ENCODE measurements at regions of chr10 and their contacts with region 1.

Region 1: GRCh38 chr10:43105102-43105785 is 28.4 kb downstream of the RET start:
- DNase-seq: peak; percentile 48 to 91 (median 75)
- ATAC-seq: peak; percentile 95
- H3K4me3 ChIP-seq: peak overlapping the region; percentile 60
- H3K4me3 Mint-ChIP-seq: peak overlapping the region; percentile 61 to 85 (median 76)
- H3K27ac ChIP-seq: no peak overlapping the region
- H3K27ac Mint-ChIP-seq: peak overlapping the region in 1 of 9 donors; percentile 49
- H3K4me1 ChIP-seq: peaks cover 0 to 8% of the 10 kb centered on the region in 2 donors
- H3K4me1 Mint-ChIP-seq: peaks cover 0 to 15% (median 7%) of the 10 kb centered on the region in 7 donors
- H3K27me3 ChIP-seq: no peaks in the 10 kb centered on the region
- H3K27me3 Mint-ChIP-seq: peaks cover 15 to 26% (median 26%) of the 10 kb centered on the region in 5 donors

Region 2: DNA sequence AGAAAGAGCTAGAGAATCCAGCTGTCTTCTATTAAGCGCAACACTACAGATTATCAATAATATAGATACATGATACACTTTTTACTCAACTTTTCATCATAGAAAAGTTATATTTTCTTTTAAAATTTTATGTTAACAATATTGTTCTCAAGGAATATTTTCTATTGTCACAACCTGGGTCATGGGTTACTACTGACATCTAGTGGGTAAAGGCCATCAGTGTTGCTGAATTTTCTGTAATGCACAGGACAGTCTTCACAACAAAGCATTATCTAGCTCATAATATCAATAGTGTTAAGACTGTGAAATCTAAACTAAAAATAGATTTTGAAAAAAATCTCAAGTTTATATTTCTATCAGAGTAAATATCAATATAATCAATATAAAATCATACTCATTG is 676.7 kb before region 1 on chr10:
- CTCF ChIA-PET with region 1: no interaction called
- POLR2A ChIA-PET with region 1: no interaction called
- intact Hi-C with region 1: no loop called
- DNase-seq: no peak
- ATAC-seq: no peak
- H3K4me3 ChIP-seq: no peak overlapping the region
- H3K4me3 Mint-ChIP-seq: no peak overlapping the region
- H3K27ac ChIP-seq: no peak overlapping the region
- H3K27ac Mint-ChIP-seq: no peak overlapping the region
- H3K4me1 ChIP-seq: no peaks in the 10 kb centered on the region
- H3K4me1 Mint-ChIP-seq: no peaks in the 10 kb centered on the region
- H3K27me3 ChIP-seq: no peaks in the 10 kb centered on the region
- H3K27me3 Mint-ChIP-seq: peaks cover 0 to 11% (median 5%) of the 10 kb centered on the region in 5 donors

Region 3: GRCh38 chr10:42753126-42753506 is 352.1 kb before region 1 on chr10:
- CTCF ChIA-PET with region 1: interaction called, 3 read pairs
- POLR2A ChIA-PET with region 1: no interaction called
- intact Hi-C with region 1: loop called in 1 of 2 experiments (anchors 1 kb)
- DNase-seq: peak; percentile 8 to 79 (median 51)
- ATAC-seq: peak; percentile 75
- H3K4me3 ChIP-seq: peak overlapping the region; percentile 59
- H3K4me3 Mint-ChIP-seq: peak overlapping the region; percentile 70 to 89 (median 83)
- H3K27ac ChIP-seq: no peak overlapping the region
- H3K27ac Mint-ChIP-seq: no peak overlapping the region
- H3K4me1 ChIP-seq: peaks cover 0 to 6% of the 10 kb centered on the region in 2 donors
- H3K4me1 Mint-ChIP-seq: peaks cover 0 to 8% (median 4%) of the 10 kb centered on the region in 7 donors
- H3K27me3 ChIP-seq: peaks cover 0 to 10% of the 10 kb centered on the region in 2 donors
- H3K27me3 Mint-ChIP-seq: peaks cover 59 to 71% (median 67%) of the 10 kb centered on the region in 5 donors

Region 4: GRCh38 chr10:42767906-42768305 is 337.3 kb before region 1 on chr10:
- CTCF ChIA-PET with region 1: no interaction called
- POLR2A ChIA-PET with region 1: no interaction called
- intact Hi-C with region 1: no loop called
- DNase-seq: no peak
- ATAC-seq: no peak
- H3K4me3 ChIP-seq: no peak overlapping the region
- H3K4me3 Mint-ChIP-seq: no peak overlapping the region
- H3K27ac ChIP-seq: no peak overlapping the region
- H3K27ac Mint-ChIP-seq: no peak overlapping the region
- H3K4me1 ChIP-seq: no peaks in the 10 kb centered on the region
- H3K4me1 Mint-ChIP-seq: peaks cover 0 to 5% (median 0%) of the 10 kb centered on the region in 7 donors
- H3K27me3 ChIP-seq: no peaks in the 10 kb centered on the region
- H3K27me3 Mint-ChIP-seq: peaks cover 13 to 60% (median 46%) of the 10 kb centered on the region in 5 donors

Region 5: DNA sequence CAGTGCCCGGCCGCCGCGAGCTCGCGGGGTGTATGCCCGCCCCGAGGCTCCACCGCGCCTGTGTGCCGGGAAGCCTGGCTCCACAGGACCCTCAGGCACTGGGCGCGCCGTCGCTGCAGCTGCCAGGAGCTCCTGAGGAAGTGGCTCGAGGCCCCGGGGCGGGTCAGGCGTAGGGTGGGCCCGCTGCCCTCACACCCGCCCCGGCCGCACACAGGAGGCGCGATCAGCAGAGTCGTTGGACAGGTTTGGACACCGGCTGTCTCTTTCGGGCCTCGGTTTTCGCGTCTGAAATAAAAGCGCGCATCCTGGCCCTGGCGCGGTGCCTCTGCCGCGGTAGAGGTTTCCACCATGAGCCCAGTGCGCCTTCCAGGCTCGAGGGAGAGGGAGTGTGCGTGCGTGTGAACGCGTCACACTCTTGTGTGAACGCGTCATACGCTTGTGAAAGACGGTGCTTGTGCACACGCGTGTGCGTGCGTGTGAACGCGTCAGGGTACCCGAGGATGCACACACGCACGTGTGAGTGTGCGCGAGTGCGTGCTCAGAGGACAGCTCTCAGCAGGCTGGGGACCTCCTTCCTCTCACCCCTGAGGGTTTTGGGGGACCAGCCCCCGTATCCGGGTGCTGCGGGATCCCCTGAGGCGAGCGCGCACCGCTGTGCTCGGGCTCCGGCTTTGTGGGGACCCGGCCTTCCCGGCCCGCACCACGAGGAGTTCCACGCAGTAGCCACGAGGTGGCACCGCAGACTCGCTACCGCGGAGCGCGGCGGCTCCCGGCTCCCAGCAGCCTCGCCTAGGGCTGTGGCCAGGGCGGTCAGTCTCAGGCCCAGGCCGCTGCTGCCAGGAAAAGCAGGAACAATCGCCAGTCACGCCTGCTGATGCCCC is 238.9 kb before region 1 on chr10:
- CTCF ChIA-PET with region 1: interaction called, 3 read pairs
- POLR2A ChIA-PET with region 1: no interaction called
- intact Hi-C with region 1: loop called in 1 of 2 experiments (anchors 1 kb)
- DNase-seq: peak; percentile 26 to 56 (median 36)
- ATAC-seq: peak; percentile 82
- H3K4me3 ChIP-seq: no peak overlapping the region
- H3K4me3 Mint-ChIP-seq: peak overlapping the region in 5 of 10 donors; percentile 45 to 64 (median 51)
- H3K27ac ChIP-seq: no peak overlapping the region
- H3K27ac Mint-ChIP-seq: no peak overlapping the region
- H3K4me1 ChIP-seq: no peaks in the 10 kb centered on the region
- H3K4me1 Mint-ChIP-seq: peaks cover 0 to 11% (median 7%) of the 10 kb centered on the region in 7 donors
- H3K27me3 ChIP-seq: no peaks in the 10 kb centered on the region
- H3K27me3 Mint-ChIP-seq: peaks cover 27 to 45% (median 43%) of the 10 kb centered on the region in 5 donors

Region 6: GRCh38 chr10:43078987-43079275 is 26.3 kb before region 1 on chr10:
- CTCF ChIA-PET with region 1: no interaction called
- POLR2A ChIA-PET with region 1: no interaction called
- intact Hi-C with region 1: loop called in 1 of 2 experiments (anchors 1 kb)
- DNase-seq: peak in 1 of 9 donors; percentile 42
- ATAC-seq: no peak
- H3K4me3 ChIP-seq: no peak overlapping the region
- H3K4me3 Mint-ChIP-seq: peak overlapping the region in 5 of 10 donors; percentile 13 to 72 (median 43)
- H3K27ac ChIP-seq: no peak overlapping the region
- H3K27ac Mint-ChIP-seq: no peak overlapping the region
- H3K4me1 ChIP-seq: no peaks in the 10 kb centered on the region
- H3K4me1 Mint-ChIP-seq: peaks cover 0 to 16% (median 8%) of the 10 kb centered on the region in 7 donors
- H3K27me3 ChIP-seq: no peaks in the 10 kb centered on the region
- H3K27me3 Mint-ChIP-seq: peaks cover 15 to 43% (median 33%) of the 10 kb centered on the region in 5 donors

Region 7: DNA sequence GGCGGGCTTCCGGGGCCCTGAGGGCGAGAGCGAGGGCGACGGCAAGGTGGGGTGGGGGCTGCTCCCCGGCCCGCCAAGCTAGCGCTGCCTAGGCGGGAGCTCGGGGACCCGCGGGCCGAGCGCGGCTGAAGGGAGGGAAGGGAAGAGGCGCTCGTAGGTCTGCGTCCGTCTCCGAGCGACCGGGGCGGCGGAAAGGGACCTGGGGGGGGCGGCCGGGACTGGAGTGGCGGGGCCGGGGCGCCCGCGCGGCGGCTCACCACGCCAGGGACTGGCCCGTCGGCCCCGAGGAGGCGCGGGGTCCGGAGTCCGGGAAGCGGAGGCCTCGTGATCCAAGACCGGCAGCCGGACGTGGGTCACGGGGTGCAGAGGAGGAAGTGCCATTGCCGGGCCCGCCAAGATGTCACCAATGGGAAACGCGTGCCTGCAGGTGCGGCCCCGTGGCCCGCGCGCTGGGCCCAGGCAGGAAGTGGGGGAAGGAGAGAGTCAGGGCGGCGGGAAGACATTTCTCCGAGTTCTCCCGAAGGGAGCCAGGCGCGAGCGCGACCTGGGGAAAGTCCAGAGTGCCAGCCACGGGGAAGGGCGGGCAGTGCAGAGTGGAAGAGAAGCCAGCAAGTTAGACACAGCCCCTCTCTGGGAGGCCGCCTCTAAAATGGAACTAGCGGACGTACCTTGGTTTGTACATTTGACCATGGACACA is 291.8 kb after region 1 on chr10:
- CTCF ChIA-PET with region 1: no interaction called
- POLR2A ChIA-PET with region 1: no interaction called
- intact Hi-C with region 1: no loop called
- DNase-seq: peak; percentile 61 to 85 (median 68)
- ATAC-seq: peak; percentile 78
- H3K4me3 ChIP-seq: peak overlapping the region; percentile 70
- H3K4me3 Mint-ChIP-seq: peak overlapping the region; percentile 90 to 100 (median 94)
- H3K27ac ChIP-seq: peak overlapping the region; percentile 89
- H3K27ac Mint-ChIP-seq: peak overlapping the region; percentile 87 to 99 (median 97)
- H3K4me1 ChIP-seq: peaks cover 55 to 66% of the 10 kb centered on the region in 2 donors
- H3K4me1 Mint-ChIP-seq: peaks cover 67 to 93% (median 81%) of the 10 kb centered on the region in 7 donors
- H3K27me3 ChIP-seq: no peaks in the 10 kb centered on the region
- H3K27me3 Mint-ChIP-seq: no peaks in the 10 kb centered on the region

Measured in naive thymus-derived CD4-positive, alpha-beta T cell (primary cell).